ENCODE measurements at regions of chr20 and their contacts with region 1.

Region 1: DNA sequence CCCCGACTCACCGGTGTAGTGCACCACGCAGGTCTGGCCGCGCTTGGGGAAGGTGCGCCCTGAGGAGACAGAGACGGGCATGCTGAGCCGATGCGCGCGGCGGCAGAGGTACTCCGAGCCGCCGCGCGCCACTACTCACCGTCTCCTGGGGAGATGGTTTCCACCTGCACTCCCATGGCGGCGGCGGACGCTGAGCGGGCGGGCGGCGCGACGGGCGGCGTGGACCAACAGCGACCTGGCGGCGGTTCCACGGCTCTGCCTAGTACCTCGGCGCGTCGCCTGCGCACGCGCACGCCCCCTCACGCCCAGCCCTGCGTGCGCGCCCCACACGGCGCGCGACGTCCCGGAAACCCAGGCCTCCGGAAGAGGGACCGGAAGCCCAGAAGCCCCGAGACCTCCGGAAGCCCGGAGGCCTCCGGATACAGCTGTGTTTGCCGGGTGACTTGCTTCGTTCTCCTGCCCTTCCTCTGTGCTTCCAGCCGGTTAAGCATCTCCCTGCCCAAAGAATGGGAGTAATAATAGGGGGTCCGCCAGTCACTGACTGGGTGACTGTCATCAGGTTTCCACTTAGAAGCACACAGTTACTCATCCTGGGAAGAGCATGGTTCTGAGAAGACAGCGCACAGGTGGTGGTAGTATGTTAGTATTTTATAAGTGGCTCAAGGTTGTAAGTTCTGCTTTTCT is at the start of gene FKBP1A:
- DNase-seq: peak; percentile 95
- H3K4me3 Mint-ChIP-seq: peak within 1 kb of the TSS; percentile 94
- H3K27ac Mint-ChIP-seq: peak within 1 kb of the TSS; percentile 92
- H3K4me1 Mint-ChIP-seq: peaks cover 49% of the 10 kb centered on the region
- H3K27me3 Mint-ChIP-seq: no peaks in the 10 kb centered on the region
- total RNA-seq, gene FKBP1A: 247 to 252 TPM

Region 2: DNA sequence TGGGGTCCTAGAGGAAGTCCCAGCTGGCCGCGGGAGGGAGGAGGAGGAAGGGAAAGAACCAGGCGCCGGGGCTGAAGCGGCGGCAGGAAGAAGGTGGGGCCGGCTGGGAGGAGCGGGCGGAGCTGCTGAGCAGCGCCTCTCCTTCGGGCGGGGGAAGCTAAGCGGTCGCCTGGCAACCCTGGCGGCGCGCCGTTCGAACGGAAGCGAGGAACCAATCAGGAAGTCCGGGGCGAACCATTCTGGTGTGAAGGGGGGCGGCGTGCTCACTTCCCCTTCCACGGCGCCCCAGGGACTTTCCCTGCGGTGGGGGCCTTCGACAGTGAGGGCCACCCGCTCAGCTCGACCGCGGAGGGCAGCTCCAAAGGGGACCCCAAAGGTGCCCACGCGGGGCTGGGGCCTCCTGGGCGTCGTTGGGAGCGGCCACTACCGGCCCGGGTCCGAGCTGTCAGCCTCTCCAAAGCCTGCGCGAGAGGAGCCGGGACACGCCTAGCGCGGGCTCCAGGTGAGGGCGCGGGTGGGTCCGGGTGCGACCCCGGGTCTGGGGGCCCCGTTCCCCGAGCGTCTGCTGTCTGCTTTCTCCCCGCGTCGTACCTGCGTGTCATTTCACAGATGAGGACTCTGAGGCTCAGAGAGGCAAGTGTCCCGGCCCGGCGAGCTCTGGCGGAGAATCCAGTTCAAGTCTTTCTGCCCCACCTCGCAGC is 559.4 kb before region 1 on chr20 and contains the start of gene FAM110A:
- CTCF ChIA-PET with region 1: no interaction called
- POLR2A ChIA-PET with region 1: no interaction called
- intact Hi-C with region 1: loop called (anchors 10 kb)
- DNase-seq: peak; percentile 97
- H3K4me3 Mint-ChIP-seq: peak within 1 kb of the TSS; percentile 92
- H3K27ac Mint-ChIP-seq: peak within 1 kb of the TSS; percentile 72
- H3K4me1 Mint-ChIP-seq: peaks cover 37% of the 10 kb centered on the region
- H3K27me3 Mint-ChIP-seq: no peaks in the 10 kb centered on the region
- total RNA-seq, gene FAM110A: 18.0 to 20.1 TPM

Region 3: GRCh38 chr20:1087311-1087905 is 305.6 kb before region 1 on chr20:
- CTCF ChIA-PET with region 1: no interaction called
- POLR2A ChIA-PET with region 1: no interaction called
- intact Hi-C with region 1: no loop called
- DNase-seq: peak; percentile 58
- H3K4me3 Mint-ChIP-seq: no peak overlapping the region
- H3K27ac Mint-ChIP-seq: no peak overlapping the region
- H3K4me1 Mint-ChIP-seq: peaks cover 24% of the 10 kb centered on the region
- H3K27me3 Mint-ChIP-seq: no peaks in the 10 kb centered on the region

Region 4: DNA sequence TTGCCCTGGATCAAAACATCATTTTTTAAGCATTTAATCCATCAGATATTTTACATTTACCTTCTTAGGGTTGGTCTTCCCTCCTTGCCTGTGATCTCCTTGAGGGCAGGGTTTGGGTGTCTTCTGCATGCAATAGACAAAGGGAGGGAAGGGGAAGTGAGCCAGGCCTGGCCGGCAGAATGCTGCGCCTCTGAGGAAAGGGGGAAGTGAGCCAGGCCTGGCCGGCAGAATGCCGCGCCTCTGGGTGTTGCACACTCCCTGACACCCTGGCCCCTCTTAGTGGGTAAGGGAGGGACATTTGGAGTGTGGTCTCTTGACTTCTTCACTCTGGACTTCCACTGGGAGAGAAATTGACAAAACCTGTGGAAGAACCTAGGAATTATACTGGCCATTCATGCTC is 262.1 kb before region 1 on chr20:
- CTCF ChIA-PET with region 1: no interaction called
- POLR2A ChIA-PET with region 1: no interaction called
- intact Hi-C with region 1: no loop called
- DNase-seq: no peak
- H3K4me3 Mint-ChIP-seq: no peak overlapping the region
- H3K27ac Mint-ChIP-seq: no peak overlapping the region
- H3K4me1 Mint-ChIP-seq: peaks cover 24% of the 10 kb centered on the region
- H3K27me3 Mint-ChIP-seq: no peaks in the 10 kb centered on the region

Region 5: GRCh38 chr20:1212607-1213396 is 180.2 kb before region 1 on chr20:
- CTCF ChIA-PET with region 1: no interaction called
- POLR2A ChIA-PET with region 1: no interaction called
- intact Hi-C with region 1: loop called (anchors 5 kb)
- DNase-seq: peak; percentile 84
- H3K4me3 Mint-ChIP-seq: no peak overlapping the region
- H3K27ac Mint-ChIP-seq: no peak overlapping the region
- H3K4me1 Mint-ChIP-seq: peaks cover 33% of the 10 kb centered on the region
- H3K27me3 Mint-ChIP-seq: no peaks in the 10 kb centered on the region

Region 6: DNA sequence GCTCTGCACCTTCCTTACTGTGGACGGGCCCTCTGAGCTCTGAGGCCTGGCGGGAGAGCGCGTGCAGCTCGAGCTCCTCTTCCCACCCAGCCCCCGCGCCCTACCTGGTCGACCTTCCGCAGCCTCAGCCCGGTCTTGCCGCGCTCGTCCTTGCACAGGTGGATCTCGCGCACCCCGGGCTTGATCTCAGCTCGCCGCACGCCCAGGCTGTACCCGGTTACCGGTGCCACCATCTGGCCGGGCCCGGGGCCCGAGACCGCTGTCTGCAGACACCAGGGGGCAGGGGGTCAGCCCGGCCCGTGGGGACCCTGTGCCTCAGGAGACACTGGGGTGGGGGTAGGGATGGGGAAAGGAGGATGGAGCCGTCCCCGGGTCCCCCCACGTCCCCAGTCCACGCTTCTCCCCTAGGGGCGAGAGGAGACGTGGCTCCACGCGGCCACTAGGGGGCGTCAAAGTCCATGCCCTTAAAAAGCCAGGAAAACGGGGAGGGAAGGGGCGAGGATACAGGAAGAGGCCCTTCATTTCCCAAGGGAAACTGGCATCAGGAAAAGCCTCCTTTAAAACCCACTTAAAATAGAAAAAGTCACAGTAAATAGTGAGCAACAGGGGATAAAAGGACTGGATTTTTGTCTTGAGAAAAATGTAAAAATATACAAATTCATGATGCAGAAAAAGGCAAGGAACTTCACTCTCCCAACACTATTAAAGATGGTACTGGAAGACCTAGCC is 79.6 kb before region 1 on chr20:
- CTCF ChIA-PET with region 1: interaction called, 13 read pairs
- POLR2A ChIA-PET with region 1: no interaction called
- intact Hi-C with region 1: no loop called
- DNase-seq: peak; percentile 70
- H3K4me3 Mint-ChIP-seq: no peak overlapping the region
- H3K27ac Mint-ChIP-seq: no peak overlapping the region
- H3K4me1 Mint-ChIP-seq: peaks cover 13% of the 10 kb centered on the region
- H3K27me3 Mint-ChIP-seq: no peaks in the 10 kb centered on the region

Region 7: DNA sequence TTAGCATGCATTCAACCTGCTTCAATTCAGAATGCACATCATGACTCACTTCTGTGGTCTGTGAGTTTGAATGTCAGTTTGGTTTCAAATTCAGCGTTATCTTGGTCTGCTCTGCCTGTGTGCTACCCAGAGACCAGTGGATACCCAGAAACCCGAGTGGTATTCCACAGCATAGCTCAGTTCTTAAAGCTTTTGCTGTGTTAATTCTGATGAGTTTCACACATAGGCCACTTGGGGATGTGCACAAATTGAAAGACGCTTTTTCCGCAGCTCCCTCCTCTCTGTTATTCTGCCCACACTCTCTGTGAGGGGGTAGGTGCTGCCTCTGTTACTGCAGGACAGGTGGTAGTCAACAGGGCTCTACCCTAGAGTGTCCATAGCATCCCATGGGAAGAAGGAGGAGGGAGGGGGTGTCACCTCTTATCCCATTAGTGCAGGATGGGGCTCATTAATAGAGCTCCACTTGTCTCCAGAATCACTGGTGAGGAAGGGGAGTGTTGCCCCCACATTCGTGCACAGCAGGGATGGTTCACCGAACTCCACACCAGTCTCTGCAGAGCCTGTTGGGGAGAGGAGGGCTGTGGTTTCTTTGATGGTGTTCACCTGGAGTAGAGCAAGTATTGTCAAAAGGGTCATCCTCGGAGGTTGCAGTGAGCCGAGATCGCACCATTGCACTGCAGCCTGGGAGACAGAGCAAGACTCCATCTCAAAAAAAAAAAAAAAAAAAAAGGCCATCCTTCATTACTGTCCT is 34.9 kb before region 1 on chr20:
- CTCF ChIA-PET with region 1: interaction called, 11 read pairs
- POLR2A ChIA-PET with region 1: interaction called, 11 read pairs
- intact Hi-C with region 1: loop called (anchors 1 kb)
- DNase-seq: peak; percentile 64
- H3K4me3 Mint-ChIP-seq: peak overlapping the region; percentile 23
- H3K27ac Mint-ChIP-seq: peak overlapping the region; percentile 72
- H3K4me1 Mint-ChIP-seq: peaks cover 58% of the 10 kb centered on the region
- H3K27me3 Mint-ChIP-seq: no peaks in the 10 kb centered on the region

Region 8: GRCh38 chr20:1437235-1437904 is 44.4 kb after region 1 on chr20:
- CTCF ChIA-PET with region 1: interaction called, 5 read pairs
- POLR2A ChIA-PET with region 1: no interaction called
- intact Hi-C with region 1: loop called (anchors 1 kb)
- DNase-seq: peak; percentile 87
- H3K4me3 Mint-ChIP-seq: peak overlapping the region; percentile 20
- H3K27ac Mint-ChIP-seq: no peak overlapping the region
- H3K4me1 Mint-ChIP-seq: peaks cover 27% of the 10 kb centered on the region
- H3K27me3 Mint-ChIP-seq: no peaks in the 10 kb centered on the region

Region 9: DNA sequence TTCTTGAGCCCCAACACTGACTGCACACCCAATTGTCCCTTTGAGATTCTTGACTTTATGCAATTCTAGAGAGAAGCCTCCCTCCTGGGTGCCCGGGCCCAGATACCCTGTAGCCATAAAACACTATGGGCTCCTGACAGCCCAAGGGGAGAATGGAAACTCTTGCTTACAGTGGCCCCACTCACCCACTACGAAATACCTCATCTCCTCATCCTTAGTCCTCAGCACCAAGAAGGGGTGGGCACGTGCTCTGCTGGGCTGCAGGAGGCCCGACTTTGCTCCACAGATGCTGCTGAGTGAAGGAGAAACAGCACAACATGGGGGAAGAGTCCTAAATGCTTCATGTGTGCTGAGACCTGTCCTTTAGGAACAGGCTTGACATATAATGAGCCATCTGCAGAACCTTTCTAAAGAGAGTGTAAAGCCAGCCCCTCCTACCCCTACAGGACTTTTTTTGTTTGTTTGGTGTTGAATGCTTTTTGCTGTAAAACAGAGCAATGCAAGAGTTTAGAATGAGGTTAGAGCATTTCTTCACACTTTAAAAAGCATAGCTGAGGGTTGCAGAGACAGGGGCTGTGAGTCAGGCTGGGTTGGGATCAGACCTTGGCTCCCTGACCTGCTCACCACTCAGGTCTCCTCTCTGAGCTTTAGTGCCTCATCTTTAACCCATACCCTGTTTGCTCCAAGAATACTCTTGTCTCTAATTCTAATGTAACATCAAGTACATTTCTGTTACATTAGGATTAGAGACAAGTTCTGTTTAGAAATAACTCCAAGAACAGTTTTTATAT is 282.2 kb after region 1 on chr20:
- CTCF ChIA-PET with region 1: no interaction called
- POLR2A ChIA-PET with region 1: no interaction called
- intact Hi-C with region 1: no loop called
- DNase-seq: no peak
- H3K4me3 Mint-ChIP-seq: peak overlapping the region; percentile 30
- H3K27ac Mint-ChIP-seq: peak overlapping the region; percentile 97
- H3K4me1 Mint-ChIP-seq: peaks cover 88% of the 10 kb centered on the region
- H3K27me3 Mint-ChIP-seq: no peaks in the 10 kb centered on the region

Region 10: GRCh38 chr20:2955257-2955970 is 1562.4 kb after region 1 on chr20:
- CTCF ChIA-PET with region 1: no interaction called
- POLR2A ChIA-PET with region 1: no interaction called
- intact Hi-C with region 1: no loop called
- DNase-seq: peak; percentile 27
- H3K4me3 Mint-ChIP-seq: no peak overlapping the region
- H3K27ac Mint-ChIP-seq: peak overlapping the region; percentile 79
- H3K4me1 Mint-ChIP-seq: peaks cover 25% of the 10 kb centered on the region
- H3K27me3 Mint-ChIP-seq: no peaks in the 10 kb centered on the region

Measured in activated CD4-positive, alpha-beta memory T cell treated with anti-CD3 and anti-CD28 coated beads for 36 hours (primary cell).